Esophagus muscularis mucosa (tissue), 4 donors: ENCODE measurements at regions of chr18 and their contacts with region 1.

Region 1: DNA sequence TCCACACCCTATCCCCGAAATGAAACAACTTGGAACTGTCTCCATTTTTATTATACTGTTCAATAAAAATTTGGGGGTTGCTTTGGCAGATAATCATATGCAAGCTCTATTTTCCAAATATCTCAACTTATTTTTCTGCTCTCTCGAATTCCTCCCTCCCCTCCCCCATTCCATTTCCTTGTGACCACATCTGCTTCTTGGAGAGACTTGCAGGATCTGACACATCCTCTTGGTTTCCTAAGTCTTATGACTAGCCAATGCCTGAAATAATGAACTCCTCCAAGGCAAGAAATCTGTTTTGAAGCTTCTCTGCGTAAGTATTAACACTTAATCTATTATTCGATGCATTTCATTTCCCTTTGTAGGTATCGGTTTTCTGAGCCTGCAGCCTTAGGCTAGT is 16.1 kb downstream of the TGIF1 start:
- DNase-seq: peak; percentile 26
- H3K4me3 ChIP-seq: no peak overlapping the region
- H3K27ac ChIP-seq: no peak overlapping the region
- H3K4me1 ChIP-seq: peaks cover 0 to 11% (median 2%) of the 10 kb centered on the region in 4 donors
- H3K27me3 ChIP-seq: no peaks in the 10 kb centered on the region
- CTCF ChIP-seq: no peak
- EP300 ChIP-seq: no peak
- POLR2A ChIP-seq: no peak

Region 2: GRCh38 chr18:3995476-3996102 is 529.5 kb after region 1 on chr18:
- intact Hi-C with region 1: no loop called
- DNase-seq: no peak
- H3K4me3 ChIP-seq: peak overlapping the region in 1 of 4 donors; percentile 4
- H3K27ac ChIP-seq: no peak overlapping the region
- H3K4me1 ChIP-seq: peaks cover 0 to 4% (median 0%) of the 10 kb centered on the region in 4 donors
- H3K27me3 ChIP-seq: no peaks in the 10 kb centered on the region
- CTCF ChIP-seq: peak; percentile 62 to 84 (median 82)
- EP300 ChIP-seq: no peak
- POLR2A ChIP-seq: no peak

Region 3: DNA sequence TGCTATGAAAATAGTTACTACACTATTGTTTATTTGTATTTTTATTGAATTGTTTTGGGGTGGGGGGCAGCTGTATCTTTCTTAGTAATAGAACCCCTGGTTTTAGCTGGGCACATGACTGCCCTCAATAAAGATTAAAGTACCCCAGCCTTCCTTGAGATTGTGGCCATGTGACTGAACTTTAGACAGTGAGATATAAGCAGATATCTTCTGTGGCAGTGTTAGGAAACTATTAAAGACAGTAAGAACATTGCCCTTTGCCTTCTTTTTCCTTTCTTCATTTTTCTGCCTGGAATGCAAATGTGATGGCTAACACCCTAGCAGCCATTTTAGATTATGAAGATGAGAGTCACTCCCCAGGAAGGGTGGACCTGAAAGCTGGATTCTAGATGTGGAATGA is 1778.9 kb after region 1 on chr18:
- intact Hi-C with region 1: loop called (anchors 10 kb)
- DNase-seq: no peak
- H3K4me3 ChIP-seq: no peak overlapping the region
- H3K27ac ChIP-seq: no peak overlapping the region
- H3K4me1 ChIP-seq: peaks cover 6 to 18% (median 14%) of the 10 kb centered on the region in 4 donors
- H3K27me3 ChIP-seq: no peaks in the 10 kb centered on the region
- CTCF ChIP-seq: no peak
- EP300 ChIP-seq: no peak
- POLR2A ChIP-seq: no peak